ENCODE measurements at regions of chr10 and their contacts with region 1.

Region 1: DNA sequence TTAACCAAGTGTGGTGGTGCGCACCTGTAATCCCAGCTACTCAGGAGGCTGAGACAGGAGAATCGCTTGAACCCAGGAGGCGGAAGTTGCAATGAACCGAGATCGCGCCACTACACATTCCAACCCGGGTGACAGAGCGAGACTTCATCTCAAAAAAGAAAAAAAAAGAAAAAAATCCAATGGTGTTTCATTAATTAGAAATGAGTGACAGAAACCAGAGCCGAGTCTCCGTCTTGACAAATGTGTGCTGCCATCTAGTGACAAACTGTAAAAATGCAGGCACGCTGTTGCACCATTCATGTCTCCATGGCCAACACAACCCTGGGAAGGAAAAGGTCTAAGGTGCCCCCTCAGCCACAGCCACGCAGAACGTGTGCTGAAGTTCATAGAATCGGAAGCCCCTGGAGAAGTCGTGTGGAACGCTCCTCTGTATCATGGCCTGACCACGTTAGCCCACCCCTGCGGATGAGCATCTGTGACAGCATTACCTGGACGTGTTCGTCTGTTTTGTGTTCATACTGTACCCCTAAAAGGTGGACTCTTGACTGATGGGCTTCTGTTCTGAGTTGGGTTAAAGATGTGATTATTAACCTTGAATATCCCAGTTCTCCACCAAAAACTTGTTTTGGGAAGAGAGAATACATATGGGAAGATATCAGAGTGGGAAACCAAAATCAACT is 94.9 kb downstream of the LYZL2 start:
- DNase-seq: peak; percentile 68
- ATAC-seq: peak; percentile 79
- H3K4me3 Mint-ChIP-seq: no peak overlapping the region
- H3K27ac Mint-ChIP-seq: peak overlapping the region; percentile 22; the same call in 1 of the 2 replicates
- H3K4me1 Mint-ChIP-seq: peaks cover 30% of the 10 kb centered on the region
- H3K27me3 Mint-ChIP-seq: no peaks in the 10 kb centered on the region
- CTCF ChIP-seq: peak; percentile 74

Region 2: DNA sequence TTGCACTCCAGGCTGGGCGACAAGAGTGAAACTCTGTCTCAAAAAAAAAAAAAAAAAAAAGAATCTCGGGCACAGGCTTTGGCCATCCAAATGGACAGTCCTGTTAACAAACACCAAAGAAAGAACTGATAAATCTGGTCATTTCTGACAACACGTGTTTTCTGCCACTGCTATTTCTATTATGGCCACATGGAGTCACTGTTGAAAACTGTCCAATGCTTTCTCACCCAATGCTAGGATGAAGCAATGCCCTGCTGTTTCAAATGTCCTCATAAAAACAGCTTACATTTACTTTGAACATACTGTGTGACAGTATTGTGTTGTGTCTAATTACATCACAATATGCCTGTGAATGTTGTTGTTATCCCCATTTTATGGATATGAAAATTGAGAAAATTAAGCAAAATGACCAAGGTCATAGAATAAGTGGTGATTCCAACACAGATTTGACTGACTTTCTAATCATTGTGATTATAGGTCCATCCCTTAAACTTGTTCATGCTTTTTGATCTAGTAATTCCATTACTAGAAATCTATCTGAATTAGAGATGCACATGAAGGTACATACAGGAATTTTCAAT is 120.5 kb before region 1 on chr10:
- CTCF ChIA-PET with region 1: interaction called, 10 read pairs
- POLR2A ChIA-PET with region 1: no interaction called
- DNase-seq: no peak
- ATAC-seq: peak; percentile 51
- H3K4me3 Mint-ChIP-seq: no peak overlapping the region
- H3K27ac Mint-ChIP-seq: no peak overlapping the region
- H3K4me1 Mint-ChIP-seq: peaks cover 8% of the 10 kb centered on the region
- H3K27me3 Mint-ChIP-seq: no peaks in the 10 kb centered on the region
- CTCF ChIP-seq: peak; percentile 40; the same call in 1 of the 2 replicates

Region 3: GRCh38 chr10:30630571-30630970 is 96.0 kb after region 1 on chr10:
- CTCF ChIA-PET with region 1: no interaction called
- POLR2A ChIA-PET with region 1: no interaction called
- DNase-seq: no peak
- ATAC-seq: no peak
- H3K4me3 Mint-ChIP-seq: no peak overlapping the region
- H3K27ac Mint-ChIP-seq: no peak overlapping the region
- H3K4me1 Mint-ChIP-seq: no peaks in the 10 kb centered on the region
- H3K27me3 Mint-ChIP-seq: no peaks in the 10 kb centered on the region; the same call in 1 of the 2 replicates
- CTCF ChIP-seq: no peak

Measured in WTC11 (cell line).